Right lobe of liver (tissue), 6 donors: ENCODE measurements at regions of chr16 and their contacts with region 1.

Region 1: DNA sequence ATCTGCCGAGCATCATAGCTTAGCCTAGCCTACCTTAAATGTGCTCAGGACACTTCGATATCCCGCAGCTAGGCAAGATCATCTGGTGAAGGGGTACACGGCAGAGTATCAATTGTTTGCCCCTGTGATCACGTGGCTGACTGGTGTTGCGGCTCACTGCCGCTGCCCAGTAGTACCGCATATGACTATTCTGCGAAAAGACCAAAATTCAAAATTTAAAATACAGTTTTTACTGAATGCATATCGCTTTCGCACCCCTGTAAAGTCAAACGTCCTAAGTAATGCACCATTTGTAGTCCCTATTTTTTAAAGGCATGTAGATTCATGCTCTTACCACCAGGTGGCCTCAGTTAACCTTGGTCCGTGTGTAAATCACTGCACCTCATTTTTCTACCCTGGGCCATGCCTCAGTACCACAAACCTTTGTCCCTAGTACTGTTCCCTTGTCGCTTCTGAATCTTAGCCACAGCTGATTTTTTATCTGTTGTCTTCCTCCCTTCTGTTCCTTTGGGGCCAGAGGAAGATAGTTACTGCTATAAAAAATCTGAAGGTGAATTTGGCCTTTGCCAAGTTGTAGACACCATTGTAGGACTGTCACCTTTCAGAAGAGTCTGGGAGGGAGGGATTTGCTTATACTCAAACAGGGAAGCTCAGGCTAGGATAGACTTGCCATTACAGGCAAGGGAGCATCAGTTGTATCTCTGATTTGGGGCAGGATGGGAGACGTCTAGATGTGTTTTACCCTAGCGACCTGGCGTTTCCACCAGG is 34.4 kb downstream of the WWP2 start:
- DNase-seq: no peak
- ATAC-seq: peak; percentile 93 to 97 (median 94)
- H3K4me3 ChIP-seq: no peak overlapping the region
- H3K27ac ChIP-seq: no peak overlapping the region
- H3K4me1 ChIP-seq: no peaks in the 10 kb centered on the region
- H3K27me3 ChIP-seq: no peaks in the 10 kb centered on the region
- CTCF ChIP-seq: peak; percentile 89 to 94 (median 91)
- POLR2A ChIP-seq: no peak

Region 2: DNA sequence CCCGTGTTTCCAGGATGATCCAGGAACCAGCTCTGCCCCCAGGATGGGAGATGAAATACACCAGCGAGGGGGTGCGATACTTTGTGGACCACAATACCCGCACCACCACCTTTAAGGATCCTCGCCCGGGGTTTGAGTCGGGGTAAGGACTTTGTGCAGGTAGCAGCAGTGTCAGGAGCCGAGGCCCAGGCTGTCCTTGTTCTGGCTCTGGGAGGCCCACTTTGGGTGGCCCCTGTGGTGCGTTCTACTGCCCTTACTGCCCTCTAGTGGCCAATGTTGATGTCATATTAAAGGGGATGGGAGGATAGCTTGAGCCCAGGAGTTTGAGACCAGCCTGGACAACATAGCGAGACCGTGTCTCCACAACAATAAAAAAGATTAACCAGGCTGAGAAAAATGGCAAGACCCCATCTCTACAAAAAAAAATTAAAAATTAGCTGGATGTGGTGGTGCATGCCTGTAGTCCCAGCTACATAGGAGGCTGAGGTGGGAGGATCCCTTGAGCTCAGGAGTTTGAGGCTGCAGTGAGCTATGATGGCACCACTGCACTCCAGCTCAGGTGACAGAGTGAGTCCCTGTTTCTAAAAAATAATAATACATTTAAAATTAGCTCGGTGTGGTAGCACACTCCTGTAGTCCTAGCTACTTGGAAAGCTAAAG is 133.7 kb after region 1 on chr16:
- intact Hi-C with region 1: loop called (anchors 5 kb)
- DNase-seq: no peak
- ATAC-seq: peak; percentile 79 to 91 (median 88)
- H3K4me3 ChIP-seq: no peak overlapping the region
- H3K27ac ChIP-seq: no peak overlapping the region
- H3K4me1 ChIP-seq: no peaks in the 10 kb centered on the region
- H3K27me3 ChIP-seq: no peaks in the 10 kb centered on the region
- CTCF ChIP-seq: peak; percentile 64 to 79 (median 70)
- POLR2A ChIP-seq: no peak